Sigmoid colon (tissue), 7 donors: ENCODE measurements at regions of chr2 and their contacts with region 1.

Region 1: GRCh38 chr2:175167792-175168563 is at the start of gene ATF2:
- DNase-seq: peak; percentile 100
- H3K4me3 ChIP-seq: peak within 1 kb of the TSS; percentile 73 to 98 (median 89)
- H3K27ac ChIP-seq: peak within 1 kb of the TSS; percentile 93 to 99 (median 96)
- H3K4me1 ChIP-seq: peaks cover 0 to 29% (median 21%) of the 10 kb centered on the region in 4 donors
- H3K27me3 ChIP-seq: no peaks in the 10 kb centered on the region
- CTCF ChIP-seq: no peak
- EP300 ChIP-seq: peak in 1 of 4 donors; percentile 4
- POLR2A ChIP-seq: peak; percentile 55 to 59
- total RNA-seq, gene ATF2: 46.0 to 59.6 (median 47.3) TPM

Region 2: DNA sequence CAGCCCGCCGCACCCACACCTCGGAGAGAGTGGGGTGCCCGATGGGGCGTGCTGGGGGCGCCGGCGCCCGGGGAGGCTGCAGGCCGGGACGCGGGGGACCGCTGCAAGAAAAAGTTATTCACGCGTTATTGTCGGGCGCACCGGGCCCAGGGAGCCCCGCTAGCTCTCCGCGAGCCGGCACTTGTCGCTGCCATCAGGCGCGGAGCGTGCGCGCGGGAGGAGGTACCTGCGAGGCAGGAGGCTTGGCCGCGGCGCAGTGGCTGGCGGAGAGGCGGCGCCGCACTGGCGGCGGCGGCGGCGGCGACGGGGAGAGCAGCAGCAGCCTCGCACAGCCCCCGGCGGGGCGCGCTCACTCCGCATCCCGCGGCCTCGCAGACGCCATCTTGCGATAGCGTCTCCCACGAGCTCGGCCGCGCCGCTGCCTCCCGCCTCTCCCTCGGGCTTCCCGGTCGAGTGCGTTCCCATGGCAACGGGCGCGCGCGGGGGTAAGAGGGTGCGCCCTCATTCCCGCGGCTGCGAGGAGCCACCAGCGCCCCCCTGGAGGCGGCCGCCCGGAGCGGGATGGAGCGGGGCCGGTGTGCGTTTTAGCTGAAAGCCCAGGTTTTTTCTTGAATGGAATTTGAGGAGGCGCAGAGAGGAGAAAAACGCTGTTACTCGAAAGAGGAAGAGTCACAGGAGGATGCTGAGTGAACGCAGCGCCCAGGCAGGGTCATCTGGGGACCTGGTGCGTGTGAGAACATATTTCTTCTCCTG is 162.8 kb before region 1 on chr2 and contains the start of gene CHN1:
- intact Hi-C with region 1: loop called (anchors 5 kb)
- DNase-seq: peak; percentile 91
- H3K4me3 ChIP-seq: peak within 1 kb of the TSS; percentile 83 to 99 (median 92)
- H3K27ac ChIP-seq: peak within 1 kb of the TSS; percentile 87 to 95 (median 94)
- H3K4me1 ChIP-seq: peaks cover 0 to 30% (median 4%) of the 10 kb centered on the region in 4 donors
- H3K27me3 ChIP-seq: no peaks in the 10 kb centered on the region
- CTCF ChIP-seq: no peak
- EP300 ChIP-seq: no peak
- POLR2A ChIP-seq: no peak
- total RNA-seq, gene CHN1: 11.4 to 15.6 (median 12.6) TPM

Region 3: GRCh38 chr2:175111200-175111657 is 56.7 kb before region 1 on chr2:
- intact Hi-C with region 1: loop called (anchors 10 kb)
- DNase-seq: no peak
- H3K4me3 ChIP-seq: no peak overlapping the region
- H3K27ac ChIP-seq: no peak overlapping the region
- H3K4me1 ChIP-seq: no peaks in the 10 kb centered on the region
- H3K27me3 ChIP-seq: no peaks in the 10 kb centered on the region
- CTCF ChIP-seq: peak in 3 of 4 experiments; percentile 55 to 73 (median 67)
- EP300 ChIP-seq: no peak
- POLR2A ChIP-seq: no peak

Region 4: GRCh38 chr2:175181104-175181876 is 13.3 kb after region 1 on chr2 and contains the start of gene ATP5MC3:
- intact Hi-C with region 1: loop called (anchors 1 kb)
- DNase-seq: peak; percentile 98
- H3K4me3 ChIP-seq: peak within 1 kb of the TSS; percentile 85 to 87 (median 86)
- H3K27ac ChIP-seq: peak within 1 kb of the TSS; percentile 86 to 98 (median 92)
- H3K4me1 ChIP-seq: peaks cover 0 to 31% (median 11%) of the 10 kb centered on the region in 4 donors
- H3K27me3 ChIP-seq: no peaks in the 10 kb centered on the region
- CTCF ChIP-seq: peak in 2 of 4 experiments; percentile 12 to 40
- EP300 ChIP-seq: no peak
- POLR2A ChIP-seq: peak; percentile 90 to 95
- total RNA-seq, gene ATP5MC3: 97.5 to 233 (median 163) TPM

Region 5: GRCh38 chr2:176096986-176097819 is 929.2 kb after region 1 on chr2:
- intact Hi-C with region 1: loop called (anchors 5 kb)
- DNase-seq: peak; percentile 92
- H3K4me3 ChIP-seq: peak overlapping the region; percentile 45 to 70 (median 68)
- H3K27ac ChIP-seq: peak overlapping the region in 3 of 4 donors; percentile 92 to 96 (median 94)
- H3K4me1 ChIP-seq: peaks cover 0 to 41% (median 34%) of the 10 kb centered on the region in 4 donors
- H3K27me3 ChIP-seq: peaks cover 0 to 98% (median 35%) of the 10 kb centered on the region in 3 donors
- CTCF ChIP-seq: peak; percentile 70 to 95 (median 88)
- EP300 ChIP-seq: no peak
- POLR2A ChIP-seq: no peak